ENCODE measurements at regions of chr12 and their contacts with region 1.

Region 1: DNA sequence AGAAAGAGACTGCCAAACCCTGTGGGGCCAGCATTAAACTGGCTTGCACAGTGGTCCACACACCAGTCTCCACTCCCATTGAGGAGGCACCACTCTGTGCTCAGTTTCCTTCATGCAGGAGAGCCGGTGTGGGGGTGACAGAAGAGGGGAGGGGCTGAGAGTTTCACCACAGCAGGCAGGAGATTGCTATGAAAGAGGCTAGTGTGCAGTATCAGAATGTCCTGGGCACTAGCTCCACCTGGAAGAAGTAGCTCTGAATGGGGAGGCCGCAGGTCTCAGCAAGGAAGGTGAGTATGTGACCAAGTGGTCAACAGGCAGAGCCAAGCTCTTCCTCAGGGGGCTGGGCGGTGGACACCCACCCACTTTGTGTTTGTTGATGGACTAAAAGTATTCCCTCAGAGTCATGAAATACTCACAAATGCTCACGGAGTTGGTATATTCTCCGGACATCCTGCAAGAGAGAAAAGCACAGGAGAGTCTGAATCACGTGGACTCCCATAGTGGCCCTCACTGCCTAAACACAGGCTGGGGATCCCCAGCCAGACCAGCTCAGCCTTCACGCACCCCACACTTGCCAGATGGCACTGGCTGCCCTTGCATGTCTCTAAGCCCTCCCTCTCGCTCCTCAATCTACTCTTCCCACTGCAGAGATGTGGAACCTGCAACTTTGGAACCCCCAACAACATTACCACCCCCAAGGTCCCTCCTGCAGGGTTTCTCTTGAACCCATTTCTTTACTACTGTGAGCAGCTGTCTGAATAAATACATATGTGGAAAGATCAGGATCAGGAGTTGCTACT is 7.8 kb upstream of the KRT72 start:
- DNase-seq: peak in 2 of 14 experiments; percentile 20 to 46
- ATAC-seq: no peak
- H3K4me3 ChIP-seq: no peak overlapping the region
- H3K4me3 Mint-ChIP-seq: peak overlapping the region; percentile 40
- H3K27ac ChIP-seq: peak overlapping the region in 1 of 2 donors; percentile 38
- H3K27ac Mint-ChIP-seq: peak overlapping the region; percentile 89
- H3K4me1 ChIP-seq: peaks cover 84% of the 10 kb centered on the region
- H3K4me1 Mint-ChIP-seq: peaks cover 97% of the 10 kb centered on the region
- H3K27me3 ChIP-seq: no peaks in the 10 kb centered on the region
- H3K27me3 Mint-ChIP-seq: no peaks in the 10 kb centered on the region
- CTCF ChIP-seq: no peak

Region 2: DNA sequence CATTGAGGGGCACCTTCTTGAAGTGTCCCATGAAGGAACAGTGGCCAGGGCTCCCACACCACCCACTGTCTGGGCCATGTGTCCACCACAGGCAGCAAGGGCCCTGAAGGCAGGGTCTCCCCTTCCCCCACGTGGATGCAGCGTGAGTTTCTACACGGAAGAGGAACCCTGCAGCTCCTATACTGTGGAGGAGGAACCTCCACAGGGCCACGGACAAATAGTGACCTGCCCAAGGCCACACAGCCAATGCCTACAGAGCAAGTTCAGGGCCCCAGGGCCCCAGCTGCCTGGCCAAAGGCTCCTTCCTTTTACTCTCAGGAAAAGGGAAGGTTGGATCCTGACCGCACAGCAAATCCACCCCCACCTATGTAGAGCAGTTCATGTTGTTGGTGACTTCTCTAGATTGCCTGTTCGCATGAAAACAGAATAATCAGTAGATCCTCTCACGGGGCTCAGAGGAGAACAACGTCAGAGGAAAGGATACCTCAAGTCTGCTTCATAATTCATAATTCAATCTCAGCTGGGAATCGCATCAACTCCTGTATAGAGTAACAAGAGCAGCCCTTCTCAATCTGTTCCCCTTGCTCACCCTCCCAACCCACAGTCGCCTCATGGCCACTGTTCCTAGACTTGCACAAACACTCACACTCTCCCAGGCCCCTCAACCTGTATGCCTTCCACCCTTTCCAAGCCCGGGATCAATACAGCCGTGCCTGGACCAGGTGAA is 20.4 kb after region 1 on chr12:
- CTCF ChIA-PET with region 1: no interaction called
- POLR2A ChIA-PET with region 1: interaction called, 27 read pairs
- intact Hi-C with region 1: loop called in 1 of 2 experiments (anchors 2 kb)
- DNase-seq: no peak
- ATAC-seq: peak; percentile 54
- H3K4me3 ChIP-seq: peak overlapping the region; percentile 39
- H3K4me3 Mint-ChIP-seq: peak overlapping the region; percentile 91
- H3K27ac ChIP-seq: no peak overlapping the region
- H3K27ac Mint-ChIP-seq: peak overlapping the region; percentile 89
- H3K4me1 ChIP-seq: peaks cover 62% of the 10 kb centered on the region
- H3K4me1 Mint-ChIP-seq: peaks cover 87% of the 10 kb centered on the region
- H3K27me3 ChIP-seq: no peaks in the 10 kb centered on the region
- H3K27me3 Mint-ChIP-seq: no peaks in the 10 kb centered on the region
- CTCF ChIP-seq: no peak

Region 3: DNA sequence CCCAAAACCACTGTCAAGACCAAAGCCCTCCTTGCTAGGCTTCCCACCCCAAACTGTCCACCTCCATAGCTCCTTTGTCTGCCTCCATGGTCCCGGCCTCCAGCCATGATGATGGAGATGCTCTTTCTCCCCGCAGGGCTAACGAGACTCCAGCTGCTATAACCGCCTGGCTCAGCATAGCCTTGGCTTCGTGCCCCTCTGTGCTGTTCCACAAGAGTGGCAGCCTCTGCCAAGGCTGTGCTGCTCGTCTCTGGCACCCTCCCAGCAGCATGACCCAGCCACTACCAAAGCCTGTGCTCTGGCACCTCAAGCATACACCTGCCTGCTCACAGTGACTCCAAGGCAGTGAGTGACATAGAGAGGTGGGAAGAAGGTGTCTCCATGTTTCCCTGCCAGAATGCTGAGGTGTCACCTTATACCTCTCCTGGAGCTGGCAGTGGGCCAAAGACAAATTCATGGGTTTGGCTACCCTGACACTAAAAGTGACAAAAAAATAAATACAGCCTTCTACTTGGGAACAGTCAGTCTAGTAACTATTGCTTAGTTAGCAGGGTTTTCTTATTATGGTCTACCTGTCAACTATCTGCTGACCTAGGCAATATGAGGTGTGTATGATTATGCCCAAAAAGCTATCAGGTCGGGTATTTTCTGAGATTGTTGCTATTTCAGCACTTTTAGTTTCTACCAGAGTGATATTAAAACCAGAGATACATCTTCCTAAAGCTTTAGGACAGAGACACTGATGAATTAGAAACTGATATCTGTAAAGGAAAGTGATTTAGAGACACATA is 25.4 kb after region 1 on chr12:
- CTCF ChIA-PET with region 1: no interaction called
- POLR2A ChIA-PET with region 1: interaction called, 27 read pairs
- intact Hi-C with region 1: loop called in 1 of 2 experiments (anchors 2 kb)
- DNase-seq: no peak
- ATAC-seq: no peak
- H3K4me3 ChIP-seq: no peak overlapping the region
- H3K4me3 Mint-ChIP-seq: peak overlapping the region; percentile 30
- H3K27ac ChIP-seq: no peak overlapping the region
- H3K27ac Mint-ChIP-seq: peak overlapping the region; percentile 89
- H3K4me1 ChIP-seq: peaks cover 55% of the 10 kb centered on the region
- H3K4me1 Mint-ChIP-seq: peaks cover 66% of the 10 kb centered on the region
- H3K27me3 ChIP-seq: no peaks in the 10 kb centered on the region
- H3K27me3 Mint-ChIP-seq: no peaks in the 10 kb centered on the region
- CTCF ChIP-seq: no peak

Region 4: DNA sequence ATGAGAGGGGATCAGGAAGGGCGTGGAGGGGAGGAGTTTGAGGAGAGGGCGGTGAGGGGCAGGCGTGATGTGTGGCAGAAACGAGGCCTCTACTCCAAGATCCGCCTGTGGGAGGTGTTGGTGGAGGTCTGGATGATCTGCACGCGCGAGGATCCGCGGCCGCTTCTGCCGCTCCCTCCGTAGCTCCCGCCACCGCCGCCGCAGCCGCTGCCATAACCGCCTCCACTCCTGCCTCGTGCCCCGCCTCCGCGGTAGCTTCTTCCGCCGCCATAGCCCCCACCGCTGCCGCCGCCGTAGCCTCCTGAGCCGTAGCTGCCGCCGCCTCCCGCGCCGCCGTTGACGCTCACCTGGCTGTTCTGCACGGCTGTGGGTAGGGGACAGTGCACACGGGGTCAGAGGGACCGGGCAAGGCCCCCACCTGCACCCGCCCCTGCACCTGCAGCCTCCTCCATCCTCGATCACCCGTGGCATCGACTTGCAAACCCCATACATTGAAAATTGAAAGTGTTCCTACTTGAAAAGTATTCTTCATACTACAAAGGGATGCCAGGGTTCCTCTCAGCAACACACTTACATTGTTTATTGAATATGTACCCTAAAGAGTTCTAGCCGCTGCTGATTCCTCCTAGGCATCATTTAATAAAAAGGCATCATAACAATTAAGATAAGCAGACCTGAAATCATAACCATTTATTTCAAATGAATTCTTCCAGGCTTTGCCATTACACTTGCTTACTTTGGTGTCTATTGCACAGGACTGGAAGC is 82.2 kb after region 1 on chr12:
- CTCF ChIA-PET with region 1: no interaction called
- POLR2A ChIA-PET with region 1: interaction called, 16 read pairs
- intact Hi-C with region 1: loop called (anchors 5 kb)
- DNase-seq: peak; percentile 43 to 77 (median 64)
- ATAC-seq: peak; percentile 87
- H3K4me3 ChIP-seq: peak overlapping the region; percentile 55
- H3K4me3 Mint-ChIP-seq: peak overlapping the region; percentile 83
- H3K27ac ChIP-seq: no peak overlapping the region
- H3K27ac Mint-ChIP-seq: peak overlapping the region; percentile 87
- H3K4me1 ChIP-seq: peaks cover 32% of the 10 kb centered on the region
- H3K4me1 Mint-ChIP-seq: peaks cover 64% of the 10 kb centered on the region
- H3K27me3 ChIP-seq: no peaks in the 10 kb centered on the region
- H3K27me3 Mint-ChIP-seq: no peaks in the 10 kb centered on the region
- CTCF ChIP-seq: no peak

Measured in CD4-positive, alpha-beta T cell (primary cell).